ENCODE measurements at regions of chr14 and their contacts with region 1.

Region 1: DNA sequence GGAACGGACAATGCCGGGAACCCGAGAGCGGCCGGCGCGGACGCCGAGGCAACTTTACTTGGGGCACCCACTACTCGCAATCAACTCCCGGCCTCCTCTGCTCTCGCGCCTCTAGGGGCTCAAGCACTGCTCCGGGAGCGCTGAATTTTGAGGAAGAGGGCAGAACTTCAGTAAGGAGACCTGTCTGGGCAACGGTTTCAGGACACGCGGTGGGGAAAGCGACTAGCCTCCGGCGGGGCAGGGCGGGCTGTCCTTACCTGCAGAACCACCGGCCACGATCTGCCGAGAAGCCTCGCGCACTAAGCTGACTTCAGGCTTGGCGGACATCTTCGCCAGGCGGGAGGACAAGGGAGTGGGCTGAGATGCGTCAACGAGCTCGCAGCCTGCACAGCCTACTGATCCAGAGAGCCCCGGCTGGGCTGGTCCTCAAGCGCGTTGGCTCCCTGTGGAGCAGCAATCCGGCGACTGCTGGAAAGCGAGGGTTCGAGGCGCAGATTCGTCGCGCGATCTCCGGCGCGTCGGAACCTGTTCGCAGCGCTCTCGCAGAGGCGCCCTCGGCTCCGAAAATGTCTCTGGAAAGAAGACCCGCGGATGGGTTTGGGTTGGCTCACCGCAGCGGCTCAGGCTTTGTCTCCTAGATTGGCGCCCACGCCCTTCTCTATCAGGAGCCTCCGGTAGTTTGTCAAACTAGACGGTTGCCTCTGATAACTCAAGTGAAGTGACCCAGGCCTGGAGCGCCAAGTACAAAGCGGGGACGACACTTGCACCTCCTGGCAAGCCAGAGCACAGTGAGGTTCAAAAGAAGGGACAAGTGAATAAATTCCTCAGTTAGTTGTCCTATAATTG is at the start of gene SLC25A21:
- DNase-seq: peak; percentile 61 to 86
- H3K4me3 ChIP-seq: peak within 1 kb of the TSS; percentile 79 to 89 (median 84)
- H3K27ac ChIP-seq: peak within 1 kb of the TSS; percentile 88
- H3K4me1 ChIP-seq: peaks cover 4 to 18% (median 13%) of the 10 kb centered on the region in 4 experiments; a peak in 5 of 7 replicates
- H3K27me3 ChIP-seq: no peaks in the 10 kb centered on the region
- CTCF ChIP-seq: peak in 1 of 3 experiments; percentile 13; a peak in 1 of 4 replicates
- EP300 ChIP-seq: 0 out of 3 replicates have a peak, but pooled peaks of 1 of the 2 experiments have one; percentile 3
- POLR2A ChIP-seq: peak; percentile 82 to 98
- RAD21 ChIP-seq: 0 out of 4 replicates have a peak, but pooled peaks of 1 of the 2 experiments have one; percentile 1
- total RNA-seq, gene SLC25A21: 6.9 and 8.7 TPM in 2 replicates

Region 2: DNA sequence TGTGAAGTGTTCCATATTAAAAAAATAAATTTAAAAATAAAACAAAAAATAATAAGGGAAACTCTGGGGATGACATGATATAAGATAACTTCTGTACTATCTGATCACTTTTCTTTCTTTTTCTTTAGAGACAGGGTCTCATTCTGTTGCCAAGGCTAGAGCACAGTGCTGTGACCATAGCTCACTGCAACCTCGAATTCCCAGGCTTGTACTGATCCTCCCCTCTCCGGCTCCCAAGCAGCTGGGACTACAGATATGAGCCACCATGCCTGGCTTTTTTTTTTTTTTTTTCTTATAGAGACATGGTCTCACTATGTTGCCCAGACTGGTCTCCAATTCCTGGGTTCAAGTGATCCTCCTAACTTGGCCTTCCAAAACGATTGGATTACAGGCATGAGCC is 15.0 kb after region 1 on chr14:
- CTCF ChIA-PET with region 1: no interaction called
- POLR2A ChIA-PET with region 1: interaction called, 14 read pairs
- DNase-seq: no peak
- H3K4me3 ChIP-seq: no peak overlapping the region
- H3K27ac ChIP-seq: no peak overlapping the region
- H3K4me1 ChIP-seq: peaks cover 0 to 2% (median 0%) of the 10 kb centered on the region in 4 experiments; a peak in 1 of 7 replicates
- H3K27me3 ChIP-seq: no peaks in the 10 kb centered on the region
- CTCF ChIP-seq: no peak
- EP300 ChIP-seq: no peak
- POLR2A ChIP-seq: no peak
- RAD21 ChIP-seq: no peak

Measured in H1 (cell line).